ENCODE measurements at regions of chr7 and their contacts with region 1.

Region 1: DNA sequence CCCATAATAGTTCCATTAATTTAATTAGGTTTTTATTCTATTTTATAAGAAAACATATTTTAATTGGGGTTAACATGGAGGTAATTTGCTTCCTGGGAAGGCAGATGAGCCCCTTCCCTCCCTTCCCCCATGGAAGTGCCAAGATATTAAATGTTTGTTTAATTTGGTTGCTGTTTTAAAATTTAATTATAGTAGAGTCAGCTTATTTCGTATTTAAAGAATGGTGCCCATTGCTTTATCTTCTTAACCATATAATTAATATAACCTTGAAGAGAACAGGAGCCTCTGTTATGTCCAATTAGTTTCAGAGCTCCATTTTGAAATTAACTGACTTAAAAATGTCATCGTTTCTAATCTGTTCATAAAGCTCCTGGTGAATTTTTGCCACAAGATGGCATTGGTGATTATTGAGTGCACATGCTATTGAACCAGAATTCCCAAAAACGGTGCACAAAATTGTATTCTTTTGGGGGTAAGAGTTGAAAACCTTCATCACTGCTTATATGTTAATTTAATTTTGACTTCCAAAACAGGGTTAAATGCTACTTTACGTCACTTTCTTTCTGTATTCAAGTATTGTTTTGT is 26.0 kb downstream of the KLHDC10 start:
- DNase-seq: no peak
- ATAC-seq: no peak
- H3K4me3 ChIP-seq: no peak overlapping the region
- H3K27ac ChIP-seq: no peak overlapping the region
- H3K4me1 ChIP-seq: no peaks in the 10 kb centered on the region
- H3K27me3 ChIP-seq: no peaks in the 10 kb centered on the region
- CTCF ChIP-seq: peak in 1 of 3 experiments; percentile 44; a peak in 2 of 6 replicates
- POLR2A ChIP-seq: no peak
- RAD21 ChIP-seq: peak; percentile 49

Region 2: GRCh38 chr7:130063036-130063435 is 33.3 kb before region 1 on chr7:
- CTCF ChIA-PET with region 1: no interaction called
- POLR2A ChIA-PET with region 1: no interaction called
- RAD21 ChIA-PET with region 1: no interaction called
- intact Hi-C with region 1: no loop called
- DNase-seq: no peak
- ATAC-seq: peak; percentile 86
- H3K4me3 ChIP-seq: no peak overlapping the region
- H3K27ac ChIP-seq: no peak overlapping the region
- H3K4me1 ChIP-seq: peaks cover 0 to 3% of the 10 kb centered on the region in 2 experiments; a peak in 1 of 4 replicates
- H3K27me3 ChIP-seq: no peaks in the 10 kb centered on the region
- CTCF ChIP-seq: peak; percentile 61 to 93 (median 91); a peak in 5 of 6 replicates
- POLR2A ChIP-seq: no peak
- RAD21 ChIP-seq: peak; percentile 74

Region 3: DNA sequence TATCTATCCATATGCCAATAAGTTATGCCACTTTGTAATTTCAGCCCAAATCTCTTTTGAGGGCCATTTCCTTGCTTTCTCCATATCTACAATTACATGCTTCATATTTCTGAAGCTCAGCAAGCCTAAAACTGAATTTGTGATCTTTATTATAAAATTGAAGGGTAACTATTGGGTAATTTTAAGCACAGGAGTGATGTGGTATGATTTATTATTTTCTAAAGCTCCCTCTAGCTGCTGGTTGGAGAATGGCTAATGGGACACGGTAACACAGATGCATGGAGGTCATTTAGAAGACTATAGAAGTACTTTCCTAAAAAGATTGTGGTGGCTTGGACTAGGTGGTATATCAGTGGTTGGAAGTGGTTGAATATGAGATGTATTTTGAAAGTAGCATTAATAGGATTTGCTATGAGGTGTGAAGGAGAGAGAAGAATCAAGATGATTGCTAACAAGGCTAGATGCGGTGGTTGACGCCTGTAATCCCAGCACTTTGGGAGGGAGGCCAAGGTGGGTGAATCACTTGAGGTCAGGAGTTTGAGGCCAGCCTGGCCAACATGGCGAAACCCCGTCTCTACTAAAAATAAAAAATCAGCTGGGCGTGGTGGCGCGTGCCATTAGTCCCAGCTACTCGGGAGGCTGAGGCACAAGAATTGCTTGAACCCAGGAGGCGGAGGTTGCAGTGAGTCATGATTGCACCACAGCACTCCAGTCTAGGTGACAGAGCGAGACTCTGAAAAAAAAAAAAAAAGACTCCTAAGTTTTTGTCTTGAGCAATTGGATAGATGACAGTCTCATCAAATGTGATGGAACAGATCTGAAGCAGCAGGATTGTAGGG is 12.1 kb before region 1 on chr7:
- CTCF ChIA-PET with region 1: interaction called, 11 read pairs
- POLR2A ChIA-PET with region 1: interaction called, 4 read pairs
- RAD21 ChIA-PET with region 1: no interaction called
- intact Hi-C with region 1: no loop called
- DNase-seq: no peak
- ATAC-seq: peak; percentile 89
- H3K4me3 ChIP-seq: no peak overlapping the region
- H3K27ac ChIP-seq: no peak overlapping the region
- H3K4me1 ChIP-seq: peaks cover 3 to 20% of the 10 kb centered on the region in 2 experiments; a peak in 3 of 4 replicates
- H3K27me3 ChIP-seq: no peaks in the 10 kb centered on the region
- CTCF ChIP-seq: peak in 2 of 3 experiments; percentile 83 to 84; a peak in 4 of 6 replicates
- POLR2A ChIP-seq: no peak
- RAD21 ChIP-seq: peak; percentile 28